Calu3 (cell line): ENCODE measurements at regions of chr16 and their contacts with region 1.

Region 1: GRCh38 chr16:88442727-88443576 is 10.1 kb upstream of the ZFPM1 start:
- DNase-seq: peak; percentile 96
- H3K4me3 Mint-ChIP-seq: no peak overlapping the region
- H3K27ac Mint-ChIP-seq: no peak overlapping the region
- H3K4me1 Mint-ChIP-seq: peaks cover 7% of the 10 kb centered on the region
- H3K27me3 Mint-ChIP-seq: peaks cover 82% of the 10 kb centered on the region
- CTCF ChIP-seq: peak; percentile 97

Region 2: GRCh38 chr16:88527186-88527936 is 84.4 kb after region 1 on chr16:
- CTCF ChIA-PET with region 1: no interaction called
- intact Hi-C with region 1: loop called (anchors 1 kb)
- DNase-seq: peak; percentile 88
- H3K4me3 Mint-ChIP-seq: no peak overlapping the region
- H3K27ac Mint-ChIP-seq: no peak overlapping the region
- H3K4me1 Mint-ChIP-seq: no peaks in the 10 kb centered on the region
- H3K27me3 Mint-ChIP-seq: no peaks in the 10 kb centered on the region
- CTCF ChIP-seq: peak; percentile 98

Region 3: GRCh38 chr16:88561485-88562369 is 118.8 kb after region 1 on chr16:
- CTCF ChIA-PET with region 1: interaction called, 4 read pairs
- intact Hi-C with region 1: loop called (anchors 1 kb)
- DNase-seq: peak; percentile 65
- H3K4me3 Mint-ChIP-seq: no peak overlapping the region
- H3K27ac Mint-ChIP-seq: no peak overlapping the region
- H3K4me1 Mint-ChIP-seq: peaks cover 14% of the 10 kb centered on the region
- H3K27me3 Mint-ChIP-seq: peaks cover 60% of the 10 kb centered on the region
- CTCF ChIP-seq: peak; percentile 74